GM12878 (cell line): ENCODE measurements at regions of chr1 and their contacts with region 1.

Region 1: GRCh38 chr1:160575112-160575664 is 4.1 kb downstream of the CD84 start:
- DNase-seq: no peak
- ATAC-seq: peak; percentile 49
- H3K4me3 ChIP-seq: no peak overlapping the region
- H3K27ac ChIP-seq: peak overlapping the region; percentile 97
- H3K4me1 ChIP-seq: peaks cover 27% of the 10 kb centered on the region
- H3K27me3 ChIP-seq: no peaks in the 10 kb centered on the region
- CTCF ChIP-seq: no peak
- EP300 ChIP-seq: no peak
- POLR2A ChIP-seq: no peak
- RAD21 ChIP-seq: no peak

Region 2: GRCh38 chr1:160539990-160540858 is 35.0 kb before region 1 on chr1:
- CTCF ChIA-PET with region 1: interaction called, 15 read pairs
- POLR2A ChIA-PET with region 1: interaction called, 10 read pairs
- RAD21 ChIA-PET with region 1: interaction called, 292 read pairs
- SMC1A ChIA-PET with region 1: interaction called, 735 read pairs
- in situ Hi-C with region 1: no loop called
- intact Hi-C with region 1: no loop called
- DNase-seq: peak; percentile 95
- ATAC-seq: peak; percentile 95
- H3K4me3 ChIP-seq: peak overlapping the region; percentile 38; the same call in 1 of the 2 replicates
- H3K27ac ChIP-seq: peak overlapping the region; percentile 92
- H3K4me1 ChIP-seq: peaks cover 23% of the 10 kb centered on the region
- H3K27me3 ChIP-seq: no peaks in the 10 kb centered on the region
- CTCF ChIP-seq: no peak
- EP300 ChIP-seq: peak; percentile 53 to 73; a peak in 3 of 4 replicates
- POLR2A ChIP-seq: peak; percentile 66
- RAD21 ChIP-seq: 0 out of 2 replicates have a peak, but pooled peaks have one; percentile 11

Region 3: GRCh38 chr1:160558660-160559380 is 16.4 kb before region 1 on chr1:
- CTCF ChIA-PET with region 1: interaction called, 121 read pairs
- POLR2A ChIA-PET with region 1: interaction called, 16 read pairs
- RAD21 ChIA-PET with region 1: interaction called, 292 read pairs
- SMC1A ChIA-PET with region 1: interaction called, 735 read pairs
- in situ Hi-C with region 1: no loop called
- intact Hi-C with region 1: no loop called
- DNase-seq: no peak
- ATAC-seq: no peak
- H3K4me3 ChIP-seq: 0 out of 2 replicates have a peak overlapping the region, but pooled peaks have one; percentile 31
- H3K27ac ChIP-seq: peak overlapping the region; percentile 64
- H3K4me1 ChIP-seq: no peaks in the 10 kb centered on the region; the same call in 1 of the 2 replicates
- H3K27me3 ChIP-seq: no peaks in the 10 kb centered on the region
- CTCF ChIP-seq: no peak
- EP300 ChIP-seq: no peak
- POLR2A ChIP-seq: no peak
- RAD21 ChIP-seq: no peak

Region 4: GRCh38 chr1:160590488-160590887 is 15.3 kb after region 1 on chr1:
- CTCF ChIA-PET with region 1: interaction called, 13 read pairs
- POLR2A ChIA-PET with region 1: interaction called, 7 read pairs
- RAD21 ChIA-PET with region 1: interaction called, 6 read pairs
- SMC1A ChIA-PET with region 1: interaction called, 25 read pairs
- in situ Hi-C with region 1: no loop called
- intact Hi-C with region 1: no loop called
- DNase-seq: no peak
- ATAC-seq: no peak
- H3K4me3 ChIP-seq: no peak overlapping the region
- H3K27ac ChIP-seq: no peak overlapping the region
- H3K4me1 ChIP-seq: no peaks in the 10 kb centered on the region
- H3K27me3 ChIP-seq: no peaks in the 10 kb centered on the region
- CTCF ChIP-seq: no peak
- EP300 ChIP-seq: no peak
- POLR2A ChIP-seq: no peak
- RAD21 ChIP-seq: no peak

Region 5: DNA sequence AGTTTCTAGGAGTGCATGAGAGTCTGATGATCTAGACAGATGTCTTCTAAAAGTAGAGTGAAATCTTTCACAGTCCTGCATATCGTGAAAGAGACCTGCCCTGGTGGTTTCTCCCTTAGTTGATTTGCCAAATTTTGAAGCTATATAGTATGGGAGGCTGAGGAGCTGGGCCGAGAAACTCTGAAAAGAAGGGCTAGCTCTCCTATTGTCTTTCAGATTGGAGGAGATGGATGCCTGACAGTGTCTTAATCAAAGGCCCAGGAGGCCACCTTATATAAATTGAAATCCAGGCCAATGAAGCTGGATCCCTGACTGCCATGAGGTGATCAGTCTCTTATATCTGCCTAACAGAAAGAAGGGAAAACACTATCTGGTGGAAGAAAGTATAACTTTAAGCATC is 22.5 kb after region 1 on chr1:
- CTCF ChIA-PET with region 1: interaction called, 3 read pairs
- POLR2A ChIA-PET with region 1: interaction called, 3 read pairs
- RAD21 ChIA-PET with region 1: interaction called, 123 read pairs
- SMC1A ChIA-PET with region 1: interaction called, 117 read pairs
- in situ Hi-C with region 1: no loop called
- intact Hi-C with region 1: no loop called
- DNase-seq: no peak
- ATAC-seq: no peak
- H3K4me3 ChIP-seq: no peak overlapping the region
- H3K27ac ChIP-seq: no peak overlapping the region
- H3K4me1 ChIP-seq: no peaks in the 10 kb centered on the region
- H3K27me3 ChIP-seq: no peaks in the 10 kb centered on the region
- CTCF ChIP-seq: no peak
- EP300 ChIP-seq: no peak
- POLR2A ChIP-seq: no peak
- RAD21 ChIP-seq: no peak

Region 6: DNA sequence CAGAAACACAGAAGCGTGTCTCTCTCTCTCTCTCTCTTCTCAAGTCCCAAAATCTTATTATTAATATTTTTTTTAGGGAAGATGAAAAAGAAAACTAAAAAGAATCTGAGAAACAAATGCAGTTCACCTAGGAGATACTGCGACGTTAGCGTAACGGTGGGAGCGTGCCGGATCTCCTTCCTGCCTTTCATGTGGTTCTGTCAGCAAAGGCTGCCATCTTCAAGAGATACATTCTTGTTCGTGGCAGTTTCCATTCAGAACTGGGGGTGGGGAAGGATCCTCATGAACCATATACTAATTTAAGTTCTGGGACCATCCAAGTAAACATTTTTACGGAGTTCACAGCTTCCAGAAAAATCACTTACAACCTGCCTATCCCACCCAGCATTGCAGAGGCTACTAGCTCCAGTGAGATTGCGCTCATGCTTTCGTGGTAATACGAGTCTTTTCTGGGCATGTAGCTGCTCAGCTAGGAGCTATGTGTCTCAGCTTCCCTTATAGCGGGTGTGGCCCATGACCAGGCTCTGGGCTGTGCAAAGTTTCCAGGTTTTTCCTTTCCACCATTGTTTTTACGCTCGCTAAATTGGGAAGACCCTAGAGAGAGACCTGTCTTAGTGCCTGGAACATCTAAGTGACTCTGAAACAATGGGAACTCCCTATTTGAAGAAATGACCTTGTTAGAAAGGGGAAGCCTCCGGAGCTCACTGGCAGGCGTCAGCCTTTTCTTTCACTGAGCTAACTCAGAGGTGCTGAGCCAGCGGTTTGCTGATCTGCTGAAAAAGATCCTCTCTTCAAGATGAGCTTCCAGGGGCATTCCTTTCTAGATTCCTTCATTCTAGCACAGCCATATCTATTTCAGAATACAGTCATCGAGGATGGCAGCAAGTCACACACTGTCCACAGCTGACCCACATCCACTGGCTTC is 54.4 kb after region 1 on chr1:
- CTCF ChIA-PET with region 1: no interaction called
- POLR2A ChIA-PET with region 1: no interaction called
- RAD21 ChIA-PET with region 1: interaction called, 11 read pairs
- SMC1A ChIA-PET with region 1: interaction called, 5 read pairs
- in situ Hi-C with region 1: no loop called
- intact Hi-C with region 1: no loop called
- DNase-seq: no peak
- ATAC-seq: no peak
- H3K4me3 ChIP-seq: peak overlapping the region; percentile 3; the same call in 1 of the 2 replicates
- H3K27ac ChIP-seq: peak overlapping the region; percentile 30
- H3K4me1 ChIP-seq: peaks cover 69% of the 10 kb centered on the region
- H3K27me3 ChIP-seq: no peaks in the 10 kb centered on the region
- CTCF ChIP-seq: no peak
- EP300 ChIP-seq: no peak
- POLR2A ChIP-seq: peak; percentile 46
- RAD21 ChIP-seq: no peak

Region 7: GRCh38 chr1:161165742-161166668 is 590.8 kb after region 1 on chr1 and contains the start of gene PPOX:
- CTCF ChIA-PET with region 1: no interaction called
- POLR2A ChIA-PET with region 1: no interaction called
- RAD21 ChIA-PET with region 1: no interaction called
- SMC1A ChIA-PET with region 1: no interaction called
- in situ Hi-C with region 1: no loop called
- intact Hi-C with region 1: no loop called
- DNase-seq: peak; percentile 92
- ATAC-seq: peak; percentile 97
- H3K4me3 ChIP-seq: peak within 1 kb of the TSS; percentile 86
- H3K27ac ChIP-seq: peak within 1 kb of the TSS; percentile 54
- H3K4me1 ChIP-seq: peaks cover 8% of the 10 kb centered on the region
- H3K27me3 ChIP-seq: no peaks in the 10 kb centered on the region
- CTCF ChIP-seq: peak; percentile 50 to 67 (median 61)
- EP300 ChIP-seq: no peak; a peak in 1 of 4 replicates
- POLR2A ChIP-seq: peak; percentile 88
- RAD21 ChIP-seq: peak; percentile 26; the same call in 1 of the 2 replicates
- polyA plus RNA-seq, gene PPOX: 8.9 to 16.3 TPM